Tibial artery (tissue), 4 donors: ENCODE measurements at regions of chr18 and their contacts with region 1.

Region 1: DNA sequence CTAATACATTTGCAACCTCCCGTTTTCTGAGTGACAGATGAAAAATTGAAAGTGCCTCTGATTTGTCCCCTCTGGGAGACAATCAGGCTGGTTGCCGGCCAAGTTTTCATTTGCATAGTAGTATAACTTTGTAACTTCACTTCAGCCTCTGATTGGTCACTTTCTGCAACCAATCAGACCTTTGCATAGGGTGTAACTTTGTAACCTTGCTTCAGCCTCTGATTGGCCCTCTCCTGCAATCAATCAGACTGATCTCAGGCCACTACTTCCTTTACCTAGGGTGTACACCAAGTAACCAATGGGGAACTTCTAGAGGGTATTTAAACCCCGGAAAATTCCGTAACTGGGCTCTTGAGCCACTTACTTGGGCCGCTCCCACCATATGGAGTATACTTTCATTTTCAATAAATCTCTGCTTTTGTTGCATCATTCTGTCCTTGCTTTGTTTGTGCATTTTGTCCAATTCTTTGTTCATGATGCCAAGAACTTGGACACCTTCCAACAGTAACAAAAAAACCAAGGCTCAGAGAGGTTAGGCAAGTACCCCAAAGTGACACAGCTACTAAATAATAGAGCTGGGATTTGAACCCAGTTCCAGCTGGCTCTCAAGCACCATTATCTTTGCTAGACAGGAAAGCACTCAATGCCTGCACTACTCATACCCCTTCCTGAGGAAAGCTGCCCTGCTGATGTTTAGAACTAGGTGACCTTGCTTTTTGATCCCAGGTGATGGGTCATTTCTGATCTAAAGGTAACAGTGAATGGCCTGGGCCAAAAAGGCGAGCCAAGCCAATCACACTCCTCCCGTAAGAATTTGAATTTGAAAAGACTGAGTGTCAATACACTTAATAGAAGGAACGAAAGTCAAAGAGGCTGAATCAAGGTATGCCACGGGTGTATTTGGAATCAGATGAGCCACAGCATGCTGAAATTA is 10.9 kb upstream of the MYOM1 start:
- DNase-seq: no peak
- H3K4me3 ChIP-seq: no peak overlapping the region
- H3K27ac ChIP-seq: no peak overlapping the region
- H3K4me1 ChIP-seq: no peaks in the 10 kb centered on the region
- H3K27me3 ChIP-seq: no peaks in the 10 kb centered on the region
- CTCF ChIP-seq: no peak

Region 2: GRCh38 chr18:2924920-2925319 is 305.7 kb before region 1 on chr18:
- intact Hi-C with region 1: loop called (anchors 5 kb)
- DNase-seq: no peak
- H3K4me3 ChIP-seq: no peak overlapping the region
- H3K27ac ChIP-seq: no peak overlapping the region
- H3K4me1 ChIP-seq: no peaks in the 10 kb centered on the region
- H3K27me3 ChIP-seq: no peaks in the 10 kb centered on the region
- CTCF ChIP-seq: no peak

Region 3: DNA sequence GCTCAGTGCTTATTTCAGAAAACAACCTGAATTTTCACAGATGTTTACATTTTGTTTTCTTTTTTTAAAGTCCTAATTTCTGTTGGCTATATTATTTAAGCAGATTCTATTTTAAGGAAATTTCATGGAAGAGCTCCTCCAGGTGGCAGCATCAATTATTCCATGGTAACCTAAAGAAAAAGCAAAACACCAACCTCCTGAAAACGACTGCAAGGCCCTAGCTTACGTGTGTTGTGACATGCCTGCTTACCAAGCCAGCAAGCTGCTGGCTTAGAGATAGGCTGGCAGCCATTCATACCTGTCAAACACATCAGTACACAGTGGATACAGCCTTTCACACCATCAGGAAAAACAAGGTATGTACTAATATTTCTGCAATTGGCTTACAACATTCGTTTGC is 282.6 kb before region 1 on chr18:
- intact Hi-C with region 1: no loop called
- DNase-seq: no peak
- H3K4me3 ChIP-seq: no peak overlapping the region
- H3K27ac ChIP-seq: no peak overlapping the region
- H3K4me1 ChIP-seq: peaks cover 0 to 5% (median 0%) of the 10 kb centered on the region in 4 donors
- H3K27me3 ChIP-seq: no peaks in the 10 kb centered on the region
- CTCF ChIP-seq: peak in 1 of 2 experiments; percentile 19

Region 4: DNA sequence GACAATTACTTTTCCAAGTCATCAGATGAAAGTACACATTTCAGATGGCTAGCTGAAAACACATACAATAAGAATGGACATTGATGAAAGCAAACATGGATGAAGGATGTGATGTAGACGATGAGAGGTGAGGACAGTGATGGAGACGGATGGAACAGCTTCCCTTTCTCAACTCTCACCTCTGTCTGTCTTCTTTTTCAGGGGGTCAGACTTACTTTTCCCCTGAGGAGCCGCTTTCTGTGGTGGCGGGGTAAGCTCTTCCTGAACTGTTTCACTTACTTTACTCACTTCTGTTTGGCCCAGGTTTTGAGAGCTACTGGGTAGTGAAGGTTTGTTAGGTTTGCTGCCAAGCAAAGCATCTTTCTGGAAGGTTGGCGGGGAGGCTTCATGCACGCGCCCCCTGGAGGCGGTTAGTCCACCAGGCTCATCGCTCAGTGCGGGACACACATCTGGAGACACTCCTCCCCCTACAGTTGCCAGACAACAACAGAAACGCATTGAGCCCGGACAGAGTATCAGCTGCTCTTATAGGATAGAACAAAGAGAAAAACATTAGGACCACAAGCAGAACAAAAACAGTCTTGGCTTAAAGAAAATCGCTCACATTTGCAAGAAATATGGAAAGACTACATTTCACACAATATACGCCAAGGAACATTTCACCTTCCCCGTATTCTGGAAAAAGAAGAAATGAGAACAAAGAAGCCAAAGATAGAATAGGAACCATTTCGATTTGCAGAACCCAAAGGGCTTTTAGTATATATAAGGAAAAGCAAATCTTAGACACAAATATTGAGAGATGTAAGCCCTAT is 101.4 kb before region 1 on chr18:
- intact Hi-C with region 1: no loop called
- DNase-seq: peak; percentile 83 to 89
- H3K4me3 ChIP-seq: no peak overlapping the region
- H3K27ac ChIP-seq: no peak overlapping the region
- H3K4me1 ChIP-seq: peaks cover 0 to 15% (median 0%) of the 10 kb centered on the region in 4 donors
- H3K27me3 ChIP-seq: no peaks in the 10 kb centered on the region
- CTCF ChIP-seq: peak; percentile 75 to 79

Region 5: DNA sequence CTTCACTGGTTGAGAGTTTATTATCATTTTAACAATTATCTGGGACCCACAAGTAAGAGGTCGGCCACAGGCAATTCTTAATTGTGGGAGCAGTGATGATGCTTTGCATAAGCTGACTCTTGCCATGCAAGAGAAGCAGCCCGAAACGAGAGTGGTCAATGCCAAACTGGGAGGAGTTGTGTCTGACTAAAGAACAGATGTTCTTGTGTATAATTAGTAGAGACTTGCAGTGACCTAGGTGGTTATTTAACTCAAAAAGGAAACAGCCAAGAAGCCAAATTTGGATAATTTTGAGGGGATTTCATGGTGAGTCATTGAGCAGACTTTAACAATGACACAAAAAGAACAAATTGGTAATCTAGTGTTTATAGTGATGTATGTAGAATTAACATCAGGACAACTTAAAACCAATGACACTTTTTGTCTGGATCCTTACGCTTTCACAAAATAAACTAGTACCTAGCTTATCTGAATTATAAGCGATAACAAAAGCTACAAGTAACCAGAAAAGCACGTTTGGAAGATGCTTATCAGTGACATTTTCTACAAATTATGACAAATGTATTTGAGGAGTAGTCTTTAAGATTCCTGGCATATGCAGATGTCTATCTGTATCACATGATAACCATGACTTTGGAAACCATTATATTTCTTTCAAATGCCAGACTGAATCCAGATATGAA is 1409.1 kb after region 1 on chr18:
- intact Hi-C with region 1: no loop called
- DNase-seq: no peak
- H3K4me3 ChIP-seq: no peak overlapping the region
- H3K27ac ChIP-seq: no peak overlapping the region
- H3K4me1 ChIP-seq: no peaks in the 10 kb centered on the region
- H3K27me3 ChIP-seq: no peaks in the 10 kb centered on the region
- CTCF ChIP-seq: no peak